ENCODE measurements at regions of chr5 and their contacts with region 1.

Region 1: DNA sequence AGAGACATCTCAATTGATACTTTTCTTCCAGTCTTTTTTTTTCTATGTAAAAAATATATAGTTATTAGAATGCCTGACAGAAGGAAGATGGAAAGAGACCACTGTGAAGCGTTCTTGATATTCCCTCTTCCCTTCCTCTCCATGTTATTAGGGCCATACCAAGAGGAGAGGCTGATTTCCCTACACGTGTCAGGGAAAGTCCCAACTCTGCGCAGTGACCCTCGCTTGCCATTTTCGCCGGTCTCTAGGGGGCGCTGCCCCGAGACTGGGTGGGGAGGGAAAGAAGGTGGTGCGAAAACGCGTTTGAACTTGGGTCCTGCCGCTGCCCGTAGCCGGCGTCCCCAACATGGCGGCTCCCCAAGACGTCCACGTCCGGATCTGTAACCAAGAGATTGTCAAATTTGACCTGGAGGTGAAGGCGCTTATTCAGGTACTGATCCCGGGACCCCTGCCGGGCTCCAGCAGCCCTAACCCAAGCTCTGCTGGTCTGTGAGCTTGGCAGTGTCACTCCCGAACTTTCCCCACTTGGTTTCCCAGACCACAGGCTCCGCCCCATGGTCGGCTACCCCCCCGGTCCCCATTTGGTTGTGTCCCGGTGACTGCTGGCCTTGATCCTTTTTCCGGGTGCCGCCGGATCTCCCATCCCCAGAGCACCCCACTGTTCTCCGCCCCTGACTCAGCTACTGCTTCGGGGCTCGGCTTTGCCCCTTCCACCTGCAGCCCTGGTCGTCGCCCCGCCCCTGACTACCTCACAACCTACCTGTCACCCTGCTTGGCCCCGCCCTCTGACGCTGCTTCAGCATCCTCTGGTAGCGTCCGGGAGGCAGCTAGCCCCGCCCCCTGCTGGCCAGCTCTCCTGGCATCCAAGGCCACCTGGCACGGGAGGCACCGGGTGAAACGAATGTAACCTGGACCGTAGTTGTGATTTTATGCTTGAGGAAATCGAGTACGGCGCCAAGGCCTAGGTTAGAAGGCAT is at the start of gene BNIP1:
- DNase-seq: peak; percentile 100
- ATAC-seq: peak; percentile 98
- H3K4me3 ChIP-seq: peak within 1 kb of the TSS; percentile 63 to 99
- H3K27ac ChIP-seq: peak within 1 kb of the TSS; percentile 95 to 99 (median 98)
- H3K4me1 ChIP-seq: peaks cover 17% of the 10 kb centered on the region
- H3K27me3 ChIP-seq: no peaks in the 10 kb centered on the region
- CTCF ChIP-seq: peak; percentile 76 to 98 (median 97)
- POLR2A ChIP-seq: peak; percentile 67 to 94 (median 93)
- total RNA-seq, gene BNIP1: 3.1 to 7.3 TPM

Region 2: GRCh38 chr5:172984243-172984953 is 160.1 kb before region 1 on chr5:
- intact Hi-C with region 1: loop called (anchors 10 kb)
- DNase-seq: peak; percentile 65 to 78 (median 73)
- ATAC-seq: peak; percentile 55
- H3K4me3 ChIP-seq: peak overlapping the region; percentile 73 to 95
- H3K27ac ChIP-seq: peak overlapping the region; percentile 90 to 96 (median 94)
- H3K4me1 ChIP-seq: peaks cover 38% of the 10 kb centered on the region
- H3K27me3 ChIP-seq: no peaks in the 10 kb centered on the region
- CTCF ChIP-seq: peak in 5 of 7 experiments; percentile 22 to 50 (median 43)
- POLR2A ChIP-seq: no peak

Measured in body of pancreas (tissue), 4 donors.